BJ (cell line): ENCODE measurements at regions of chr1 and their contacts with region 1.

Region 1: DNA sequence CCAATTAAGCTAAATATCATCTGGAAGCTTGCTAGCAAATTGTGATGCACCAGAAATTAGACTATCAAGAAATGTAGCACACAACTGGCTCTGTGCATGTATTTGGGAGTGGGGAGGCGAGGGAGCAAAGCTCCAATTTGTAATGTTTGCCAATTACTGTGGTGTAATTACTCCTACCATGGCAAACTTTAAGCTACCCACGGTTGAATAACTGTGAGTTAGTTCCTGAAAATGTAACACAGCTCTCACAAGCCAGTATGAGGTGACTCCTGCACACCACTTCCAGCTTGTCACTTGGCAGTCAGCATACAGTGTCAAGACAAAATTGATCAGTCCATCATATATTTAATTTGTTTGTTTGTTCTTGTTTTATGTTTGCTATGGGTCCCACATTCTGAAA is 141.2 kb downstream of the TM2D1 start:
- DNase-seq: no peak
- H3K4me3 ChIP-seq: no peak overlapping the region
- H3K27me3 ChIP-seq: 0 out of 2 replicates have a peak, but pooled peaks cover 1% of the 10 kb centered on the region
- CTCF ChIP-seq: no peak

Region 2: DNA sequence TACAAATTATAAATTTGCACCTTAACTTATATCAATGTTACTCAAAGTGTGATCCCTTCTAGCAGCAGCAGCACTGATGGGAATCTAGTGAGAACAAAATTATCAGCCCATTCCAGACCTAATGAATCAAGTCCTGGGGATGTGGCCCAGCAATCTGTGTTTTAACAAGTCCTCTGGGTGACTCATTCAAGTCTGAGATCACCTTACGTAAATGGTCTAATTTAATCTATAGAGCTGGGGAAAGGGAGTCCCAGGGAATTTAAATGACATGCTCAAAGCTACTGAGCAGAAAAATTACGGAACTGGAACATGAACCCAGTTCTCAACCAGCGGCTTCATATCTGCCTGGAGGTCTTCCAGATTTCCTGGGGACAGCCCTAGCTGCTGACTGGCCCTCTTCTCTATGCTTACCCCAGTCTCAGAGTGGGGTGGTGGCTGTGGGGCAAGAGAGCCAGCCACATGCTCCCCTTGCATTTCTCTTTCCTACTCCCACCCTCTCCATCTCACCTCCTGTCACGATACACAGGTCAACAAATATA is 78.8 kb before region 1 on chr1:
- CTCF ChIA-PET with region 1: no interaction called
- POLR2A ChIA-PET with region 1: no interaction called
- DNase-seq: no peak
- H3K4me3 ChIP-seq: no peak overlapping the region
- H3K27me3 ChIP-seq: no peaks in the 10 kb centered on the region
- CTCF ChIP-seq: no peak

Region 3: GRCh38 chr1:61569303-61569621 is 14.4 kb before region 1 on chr1:
- CTCF ChIA-PET with region 1: interaction called, 10 read pairs
- POLR2A ChIA-PET with region 1: no interaction called
- DNase-seq: no peak
- H3K4me3 ChIP-seq: no peak overlapping the region
- H3K27me3 ChIP-seq: no peaks in the 10 kb centered on the region
- CTCF ChIP-seq: no peak

Region 4: GRCh38 chr1:61851849-61852669 is 268.4 kb after region 1 on chr1:
- CTCF ChIA-PET with region 1: no interaction called
- POLR2A ChIA-PET with region 1: no interaction called
- DNase-seq: no peak
- H3K4me3 ChIP-seq: no peak overlapping the region
- H3K27me3 ChIP-seq: no peaks in the 10 kb centered on the region
- CTCF ChIP-seq: peak; percentile 70